H1 (cell line): ENCODE measurements at regions of chr5 and their contacts with region 1.

Region 1: DNA sequence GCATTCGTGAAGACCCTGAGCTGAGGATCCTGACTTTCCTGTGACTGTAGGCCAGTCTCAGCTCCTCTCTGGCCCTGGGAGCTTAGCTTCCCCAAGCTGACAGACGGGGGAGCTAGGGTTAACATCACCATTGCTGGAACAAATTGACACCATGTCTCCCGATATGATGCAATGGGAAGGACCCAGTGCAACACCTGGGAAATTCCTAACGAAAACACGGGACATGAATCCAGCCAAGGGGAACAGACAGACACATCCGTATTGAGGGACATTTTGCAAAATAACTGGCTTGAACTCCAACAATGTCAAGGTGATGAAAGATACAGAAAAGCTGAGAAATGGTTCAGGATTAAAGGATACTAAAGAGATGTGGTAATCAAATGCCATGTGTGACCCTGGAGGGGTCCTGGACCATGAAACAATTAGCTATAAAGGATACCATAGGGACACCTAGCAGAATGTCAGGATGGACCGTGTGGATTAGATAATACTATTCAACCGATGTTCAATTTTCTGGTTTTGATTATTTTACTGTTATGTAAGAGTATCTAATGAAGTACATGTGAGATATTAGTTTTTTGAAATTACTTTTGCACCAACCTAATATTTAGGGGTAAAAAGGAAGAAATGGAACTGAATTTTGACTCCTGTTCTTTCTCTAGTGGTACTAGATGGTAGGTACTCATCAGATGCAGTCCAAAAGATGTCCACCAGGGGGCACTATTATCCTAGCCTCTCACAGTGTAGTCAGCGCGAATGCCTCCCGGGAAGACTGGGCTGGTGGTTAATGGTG is 52.7 kb downstream of the NDST1 start:
- DNase-seq: peak; percentile 56 to 96
- H3K4me3 ChIP-seq: peak overlapping the region in 1 of 4 experiments; percentile 23; a peak in 1 of 8 replicates
- H3K27ac ChIP-seq: 0 out of 2 replicates have a peak overlapping the region, but pooled peaks have one; percentile 2
- H3K4me1 ChIP-seq: peaks cover 2 to 9% (median 4%) of the 10 kb centered on the region in 4 experiments
- H3K27me3 ChIP-seq: no peaks in the 10 kb centered on the region
- CTCF ChIP-seq: peak; percentile 50 to 91 (median 82)
- EP300 ChIP-seq: peak in 1 of 2 experiments; percentile 20; a peak in 1 of 3 replicates
- POLR2A ChIP-seq: no peak
- RAD21 ChIP-seq: peak; percentile 93 to 94

Region 2: DNA sequence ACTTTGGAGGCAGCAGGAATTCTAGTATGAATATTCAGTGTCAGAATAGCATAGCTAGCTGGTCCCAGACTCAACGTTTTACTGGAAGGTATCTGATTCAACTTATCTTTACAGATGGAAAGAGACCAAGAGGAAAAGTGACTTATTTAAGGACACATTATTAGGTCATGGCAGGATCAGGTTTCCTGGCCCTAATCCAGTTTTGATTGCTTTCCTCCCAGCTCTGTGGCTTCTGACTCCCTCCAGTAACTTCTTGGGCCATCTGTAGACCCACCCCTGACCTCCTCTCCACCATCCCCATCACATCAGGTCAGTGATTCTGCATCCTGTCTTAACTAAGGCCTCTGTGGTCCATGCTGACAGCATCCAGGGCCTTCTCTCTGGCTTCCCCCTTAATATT is 1536.1 kb before region 1 on chr5:
- CTCF ChIA-PET with region 1: no interaction called
- POLR2A ChIA-PET with region 1: no interaction called
- DNase-seq: no peak
- H3K4me3 ChIP-seq: no peak overlapping the region
- H3K27ac ChIP-seq: no peak overlapping the region
- H3K4me1 ChIP-seq: no peaks in the 10 kb centered on the region
- H3K27me3 ChIP-seq: no peaks in the 10 kb centered on the region
- CTCF ChIP-seq: no peak
- EP300 ChIP-seq: no peak
- POLR2A ChIP-seq: no peak
- RAD21 ChIP-seq: no peak

Region 3: DNA sequence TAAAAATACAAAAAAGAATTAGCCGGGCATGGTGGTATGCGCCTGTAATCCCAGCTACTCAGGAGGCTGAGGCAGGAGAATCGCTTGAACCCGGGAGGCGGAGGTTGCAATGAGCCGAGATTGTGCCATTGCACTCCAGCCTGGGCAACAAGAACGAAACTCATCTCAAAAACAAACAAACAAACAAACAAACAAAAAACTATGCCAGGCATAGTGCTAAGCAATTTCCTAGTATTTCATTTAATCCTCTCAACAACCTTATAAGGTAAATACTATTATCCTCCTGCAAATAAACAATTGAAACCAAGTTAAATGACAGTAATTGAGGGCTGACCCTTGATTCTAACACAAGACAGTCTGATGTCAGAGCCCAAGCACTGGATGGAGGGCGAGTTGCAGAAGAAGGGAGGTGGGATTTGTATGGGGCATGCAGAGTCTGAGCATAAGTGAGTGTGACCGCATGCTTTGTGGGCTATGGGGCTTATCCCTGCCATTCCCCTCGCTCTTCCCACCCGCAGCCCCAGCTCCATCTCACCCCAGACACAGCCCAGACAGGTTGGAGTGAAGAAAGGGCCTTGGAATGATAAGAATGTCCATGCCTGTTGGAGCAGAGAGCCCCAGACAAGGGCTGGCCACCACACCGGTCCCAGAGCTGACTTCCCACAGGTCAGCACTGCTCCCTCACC is 86.8 kb before region 1 on chr5:
- CTCF ChIA-PET with region 1: interaction called, 10 read pairs
- POLR2A ChIA-PET with region 1: no interaction called
- DNase-seq: peak in 1 of 2 experiments; percentile 82
- H3K4me3 ChIP-seq: no peak overlapping the region
- H3K27ac ChIP-seq: no peak overlapping the region
- H3K4me1 ChIP-seq: peaks cover 0 to 18% (median 5%) of the 10 kb centered on the region in 4 experiments; a peak in 6 of 7 replicates
- H3K27me3 ChIP-seq: no peaks in the 10 kb centered on the region
- CTCF ChIP-seq: no peak
- EP300 ChIP-seq: no peak
- POLR2A ChIP-seq: no peak
- RAD21 ChIP-seq: no peak

Region 4: GRCh38 chr5:150544611-150545219 is 15.9 kb before region 1 on chr5:
- CTCF ChIA-PET with region 1: interaction called, 44 read pairs
- POLR2A ChIA-PET with region 1: interaction called, 5 read pairs
- DNase-seq: peak; percentile 67 to 97
- H3K4me3 ChIP-seq: no peak overlapping the region
- H3K27ac ChIP-seq: 0 out of 2 replicates have a peak overlapping the region, but pooled peaks have one; percentile 14
- H3K4me1 ChIP-seq: no peaks in the 10 kb centered on the region; a peak in 1 of 7 replicates
- H3K27me3 ChIP-seq: no peaks in the 10 kb centered on the region
- CTCF ChIP-seq: peak; percentile 99 to 100 (median 99)
- EP300 ChIP-seq: no peak
- POLR2A ChIP-seq: 0 out of 3 replicates have a peak, but pooled peaks of 1 of the 2 experiments have one; percentile 30
- RAD21 ChIP-seq: peak; percentile 81 to 89

Region 5: DNA sequence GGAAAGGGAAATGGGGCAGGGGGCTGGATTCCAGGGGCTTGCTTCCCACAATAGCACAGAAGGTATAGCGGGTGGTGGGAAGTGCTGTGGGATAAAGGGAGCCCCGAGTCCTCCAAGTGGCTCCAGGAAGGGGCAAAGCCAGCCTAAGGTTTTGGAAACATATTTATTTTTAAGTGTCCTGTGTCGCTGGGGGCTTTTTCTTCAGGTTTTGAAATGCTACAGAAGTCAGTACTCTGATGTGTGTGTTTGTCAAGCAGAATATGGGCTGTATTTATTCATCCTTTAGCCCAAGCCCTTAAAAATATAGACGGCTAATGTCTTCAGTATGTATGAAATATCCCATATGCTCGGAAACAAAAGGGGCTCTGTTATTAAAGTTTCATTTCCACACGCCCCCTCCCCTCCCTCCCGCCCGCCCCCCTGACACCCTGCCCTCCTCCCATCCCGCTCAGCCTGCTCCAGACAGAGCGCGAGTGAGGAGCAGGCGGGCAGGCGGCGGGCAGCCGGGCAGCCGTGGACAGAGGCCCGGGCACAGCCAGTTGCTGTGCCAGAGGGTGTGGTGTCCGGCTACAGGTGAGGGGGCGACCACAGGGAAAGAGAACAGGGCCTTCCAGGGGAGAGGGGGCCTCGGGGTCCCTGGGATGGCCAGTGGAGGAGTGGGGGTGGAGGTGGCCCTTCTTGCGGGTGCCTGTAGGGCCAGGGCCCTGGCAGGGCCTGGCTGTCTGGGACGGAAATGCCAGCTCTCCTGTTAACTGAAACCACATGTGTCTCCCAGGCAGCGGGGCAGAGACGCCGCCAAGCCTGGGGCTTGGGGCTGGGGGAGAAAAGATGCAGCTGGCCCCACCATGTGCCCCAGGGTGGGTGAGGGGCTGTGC is 40.3 kb after region 1 on chr5:
- CTCF ChIA-PET with region 1: interaction called, 18 read pairs
- POLR2A ChIA-PET with region 1: interaction called, 5 read pairs
- DNase-seq: no peak
- H3K4me3 ChIP-seq: no peak overlapping the region
- H3K27ac ChIP-seq: no peak overlapping the region
- H3K4me1 ChIP-seq: peaks cover 0 to 2% (median 0%) of the 10 kb centered on the region in 4 experiments; a peak in 1 of 7 replicates
- H3K27me3 ChIP-seq: no peaks in the 10 kb centered on the region
- CTCF ChIP-seq: no peak
- EP300 ChIP-seq: no peak
- POLR2A ChIP-seq: no peak
- RAD21 ChIP-seq: no peak

Region 6: DNA sequence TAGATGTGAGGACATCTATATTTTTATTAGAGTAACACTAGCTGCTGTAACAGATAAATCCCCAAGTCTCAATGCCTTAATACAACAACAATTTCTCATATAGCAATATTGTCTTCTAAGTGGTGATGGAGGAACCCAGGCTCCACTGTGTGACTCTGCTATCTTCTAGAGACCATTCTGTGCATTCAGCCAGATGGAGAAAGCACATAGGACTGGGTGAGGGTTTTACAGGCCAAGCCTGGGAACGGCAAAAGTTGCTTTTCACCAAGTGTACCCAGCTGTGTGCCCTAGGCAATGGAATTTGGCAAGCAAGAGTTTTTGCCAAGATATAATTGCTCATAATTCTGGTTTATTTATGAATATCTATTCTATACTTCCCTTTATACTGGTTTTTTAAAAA is 128.5 kb after region 1 on chr5:
- CTCF ChIA-PET with region 1: interaction called, 11 read pairs
- POLR2A ChIA-PET with region 1: no interaction called
- DNase-seq: no peak
- H3K4me3 ChIP-seq: no peak overlapping the region
- H3K27ac ChIP-seq: no peak overlapping the region
- H3K4me1 ChIP-seq: no peaks in the 10 kb centered on the region
- H3K27me3 ChIP-seq: no peaks in the 10 kb centered on the region
- CTCF ChIP-seq: no peak
- EP300 ChIP-seq: no peak
- POLR2A ChIP-seq: no peak
- RAD21 ChIP-seq: no peak

Region 7: DNA sequence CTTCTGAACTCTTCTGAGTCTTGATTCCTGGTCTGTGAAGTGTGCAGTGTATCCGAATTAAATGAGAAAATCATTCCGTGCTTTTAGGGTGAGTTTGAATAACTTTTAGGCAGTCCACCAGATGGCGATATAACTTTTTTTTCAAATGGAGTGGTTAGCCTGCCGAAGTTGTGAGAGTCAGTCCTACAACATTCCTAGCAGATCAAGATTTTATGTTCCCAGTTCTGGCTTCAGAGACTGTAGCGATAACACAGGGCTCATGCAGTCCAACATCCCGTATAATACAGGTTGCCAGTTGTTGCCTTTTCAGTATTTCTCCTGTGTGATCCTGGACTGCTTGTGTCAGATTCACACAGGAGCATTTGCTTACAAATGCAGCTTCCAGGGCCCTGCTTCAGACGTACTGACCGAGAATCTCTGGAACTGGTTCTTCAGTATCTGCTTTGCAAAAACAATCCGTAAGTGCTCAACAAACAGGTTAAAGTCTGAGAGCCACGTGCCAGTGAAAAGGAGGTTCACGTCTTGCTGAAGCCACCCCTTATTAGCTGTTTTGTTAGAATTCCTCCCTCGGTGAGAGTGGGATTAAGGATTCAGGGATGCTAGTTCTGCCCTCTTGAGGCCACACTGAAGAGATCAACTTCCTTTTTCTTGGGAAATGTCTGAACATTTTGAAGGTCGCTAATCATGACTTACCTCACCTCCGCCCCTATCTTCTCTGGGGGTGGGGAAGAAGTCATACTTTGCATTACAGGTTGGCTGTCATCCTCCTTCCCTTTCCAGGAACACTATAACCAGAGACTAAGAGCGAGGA is 240.7 kb after region 1 on chr5:
- CTCF ChIA-PET with region 1: interaction called, 18 read pairs
- POLR2A ChIA-PET with region 1: no interaction called
- DNase-seq: peak in 1 of 2 experiments; percentile 75
- H3K4me3 ChIP-seq: peak overlapping the region; percentile 52 to 60 (median 56)
- H3K27ac ChIP-seq: 0 out of 2 replicates have a peak overlapping the region, but pooled peaks have one; percentile 5
- H3K4me1 ChIP-seq: peaks cover 0 to 3% (median 0%) of the 10 kb centered on the region in 4 experiments; a peak in 1 of 7 replicates
- H3K27me3 ChIP-seq: no peaks in the 10 kb centered on the region
- CTCF ChIP-seq: peak in 2 of 3 experiments; percentile 57 to 72; a peak in 3 of 4 replicates
- EP300 ChIP-seq: no peak
- POLR2A ChIP-seq: no peak
- RAD21 ChIP-seq: peak; percentile 62 to 70